Posterior cingulate gyrus (tissue), 11 donors: ENCODE measurements at regions of chr2 and their contacts with region 1.

Region 1: GRCh38 chr2:71068218-71069035 is at the start of gene NAGK:
- DNase-seq: peak; percentile 93 to 99 (median 96)

Region 2: GRCh38 chr2:70994756-70995729 is 73.4 kb before region 1 on chr2 and contains the start of gene TEX261:
- intact Hi-C with region 1: loop called (anchors 5 kb)
- DNase-seq: peak; percentile 83 to 98 (median 90)

Region 3: DNA sequence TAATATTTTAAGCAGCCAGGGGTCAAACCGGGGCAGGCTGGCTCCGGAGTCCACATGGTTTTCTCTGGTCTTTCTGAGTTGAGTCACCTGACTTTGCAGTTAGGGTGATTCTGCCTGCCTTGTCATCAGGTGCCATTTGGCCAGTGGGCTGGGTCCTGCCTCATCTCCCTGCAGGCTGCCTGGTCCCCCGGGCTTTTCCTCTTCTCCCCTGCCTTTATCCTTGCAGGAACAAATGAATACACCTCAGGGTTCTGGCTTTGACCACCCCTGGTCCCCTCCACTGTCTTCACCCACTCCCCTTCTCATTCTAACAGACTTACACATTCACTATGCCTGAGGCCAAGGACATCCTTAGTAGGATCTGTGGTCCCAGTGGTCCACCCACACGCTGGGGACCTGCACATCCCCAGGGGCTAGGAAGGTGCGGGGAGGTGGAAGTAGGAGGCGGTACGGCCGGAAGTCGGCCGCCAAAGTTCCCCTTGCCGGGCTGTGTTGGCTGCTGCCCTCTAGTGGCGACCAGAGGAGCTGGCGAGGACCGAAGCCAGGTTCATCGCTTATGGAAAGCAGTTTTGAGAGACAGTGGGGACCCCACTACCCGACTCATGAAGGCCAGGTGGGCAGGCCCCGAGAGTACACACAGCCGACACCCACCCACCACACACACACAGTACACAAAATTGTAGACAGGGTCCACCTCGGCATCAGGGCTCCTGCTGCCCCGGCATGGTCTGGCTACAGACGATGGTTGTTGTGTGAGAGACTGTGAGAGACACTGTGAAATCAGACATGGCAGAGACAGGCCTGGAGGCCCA is 67.4 kb before region 1 on chr2:
- intact Hi-C with region 1: loop called (anchors 5 kb)
- DNase-seq: peak; percentile 40 to 96 (median 72)

Region 4: GRCh38 chr2:71129863-71130112 is 61.4 kb after region 1 on chr2:
- intact Hi-C with region 1: loop called (anchors 2 kb)
- DNase-seq: no peak

Region 5: GRCh38 chr2:71157124-71157793 is 88.8 kb after region 1 on chr2:
- intact Hi-C with region 1: no loop called
- DNase-seq: peak in 9 of 10 donors; percentile 17 to 94 (median 75)